AG04449 (cell line): ENCODE measurements at regions of chr6 and their contacts with region 1.

Region 1: GRCh38 chr6:85354761-85355618 is 94.9 kb upstream of the NT5E start:
- DNase-seq: peak; percentile 12
- H3K4me3 ChIP-seq: no peak overlapping the region
- CTCF ChIP-seq: peak; percentile 77

Region 2: DNA sequence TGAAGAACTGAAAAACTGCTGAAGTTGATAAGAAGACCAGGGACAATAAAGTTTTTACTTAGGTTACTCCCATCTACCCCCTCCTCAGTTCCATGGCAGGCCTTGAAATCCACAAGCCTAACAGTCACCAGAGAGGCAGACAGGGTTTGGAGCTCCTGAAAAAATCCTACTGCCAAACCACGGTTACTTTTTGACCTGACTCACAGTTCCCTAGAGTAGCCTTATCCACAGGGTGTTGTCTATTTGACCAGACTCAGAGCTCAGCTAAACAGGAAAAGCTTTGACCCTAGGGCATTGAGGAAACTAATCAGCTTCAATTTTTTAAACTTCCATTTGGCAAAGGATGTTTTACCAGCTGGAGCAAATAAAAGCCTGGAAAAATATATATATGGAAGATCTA is 162.8 kb before region 1 on chr6:
- CTCF ChIA-PET with region 1: no interaction called
- POLR2A ChIA-PET with region 1: no interaction called
- DNase-seq: no peak
- H3K4me3 ChIP-seq: no peak overlapping the region
- CTCF ChIP-seq: no peak

Region 3: DNA sequence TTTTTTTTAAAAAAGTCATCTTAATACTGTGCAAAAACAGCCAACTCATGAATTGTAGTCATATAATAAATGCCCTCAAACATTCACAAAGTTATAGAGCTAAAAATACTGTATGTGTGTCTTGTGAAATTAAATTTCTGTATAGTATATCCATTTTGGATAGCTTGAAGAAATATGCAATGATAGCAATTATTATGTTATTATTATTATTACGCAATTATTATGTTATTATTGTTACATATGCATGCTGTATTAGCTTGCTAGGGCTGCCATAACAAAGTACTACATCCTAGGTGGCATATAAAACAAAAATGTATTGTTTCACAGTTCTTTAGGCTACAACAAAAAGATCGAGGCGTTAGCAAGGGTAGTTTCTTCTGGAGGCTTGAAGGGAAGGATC is 24.6 kb before region 1 on chr6:
- CTCF ChIA-PET with region 1: no interaction called
- POLR2A ChIA-PET with region 1: no interaction called
- DNase-seq: no peak
- H3K4me3 ChIP-seq: no peak overlapping the region
- CTCF ChIP-seq: no peak

Region 4: DNA sequence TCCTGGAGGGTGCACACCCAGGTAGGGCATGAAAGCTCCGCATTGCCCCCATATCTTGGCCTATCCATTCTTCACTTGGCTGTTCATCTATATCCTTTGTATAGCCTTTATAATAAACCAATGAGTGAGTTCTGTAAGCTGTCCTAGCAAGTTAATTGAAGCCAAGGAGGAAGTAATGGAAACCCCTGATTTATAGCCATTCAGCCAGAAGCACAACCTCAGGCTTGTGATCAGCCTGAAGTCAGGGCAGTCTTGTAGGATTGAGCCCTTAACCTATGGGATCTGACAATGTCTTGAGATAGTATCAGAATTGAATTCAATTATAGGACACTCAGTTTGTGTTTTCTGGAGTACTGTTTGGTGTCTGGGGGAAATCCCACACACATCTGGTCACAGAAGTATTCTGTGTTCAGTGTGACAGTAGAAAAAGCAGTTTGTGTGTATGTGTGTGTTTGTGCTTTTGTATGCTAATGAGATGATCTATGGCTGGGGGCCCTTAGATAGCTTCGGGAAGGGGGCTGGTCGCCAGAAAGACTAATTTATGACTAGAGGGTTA is 100.6 kb after region 1 on chr6:
- CTCF ChIA-PET with region 1: interaction called, 32 read pairs
- POLR2A ChIA-PET with region 1: interaction called, 7 read pairs
- DNase-seq: no peak
- H3K4me3 ChIP-seq: no peak overlapping the region
- CTCF ChIP-seq: no peak

Region 5: DNA sequence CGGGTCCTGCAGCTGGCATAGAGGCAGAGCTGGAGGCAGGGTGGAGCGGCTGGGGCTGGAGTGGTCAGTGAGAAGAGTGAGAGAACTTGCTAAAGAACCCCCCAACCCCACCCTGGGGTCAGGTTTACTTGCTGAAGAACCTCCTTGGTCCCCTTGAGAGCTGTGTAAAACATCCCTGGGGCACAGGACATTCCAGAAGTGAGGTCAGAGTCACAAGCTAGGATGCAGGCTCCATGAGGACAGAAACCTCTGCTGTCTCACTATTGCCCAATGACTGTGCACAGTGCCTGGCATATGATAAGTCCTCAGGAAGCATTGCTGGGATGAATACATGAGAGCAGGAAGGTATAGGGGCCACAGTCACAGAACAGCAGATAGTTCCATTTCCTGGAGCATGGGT is 113.3 kb after region 1 on chr6:
- CTCF ChIA-PET with region 1: interaction called, 21 read pairs
- POLR2A ChIA-PET with region 1: interaction called, 10 read pairs
- DNase-seq: no peak
- H3K4me3 ChIP-seq: no peak overlapping the region
- CTCF ChIP-seq: no peak

Region 6: DNA sequence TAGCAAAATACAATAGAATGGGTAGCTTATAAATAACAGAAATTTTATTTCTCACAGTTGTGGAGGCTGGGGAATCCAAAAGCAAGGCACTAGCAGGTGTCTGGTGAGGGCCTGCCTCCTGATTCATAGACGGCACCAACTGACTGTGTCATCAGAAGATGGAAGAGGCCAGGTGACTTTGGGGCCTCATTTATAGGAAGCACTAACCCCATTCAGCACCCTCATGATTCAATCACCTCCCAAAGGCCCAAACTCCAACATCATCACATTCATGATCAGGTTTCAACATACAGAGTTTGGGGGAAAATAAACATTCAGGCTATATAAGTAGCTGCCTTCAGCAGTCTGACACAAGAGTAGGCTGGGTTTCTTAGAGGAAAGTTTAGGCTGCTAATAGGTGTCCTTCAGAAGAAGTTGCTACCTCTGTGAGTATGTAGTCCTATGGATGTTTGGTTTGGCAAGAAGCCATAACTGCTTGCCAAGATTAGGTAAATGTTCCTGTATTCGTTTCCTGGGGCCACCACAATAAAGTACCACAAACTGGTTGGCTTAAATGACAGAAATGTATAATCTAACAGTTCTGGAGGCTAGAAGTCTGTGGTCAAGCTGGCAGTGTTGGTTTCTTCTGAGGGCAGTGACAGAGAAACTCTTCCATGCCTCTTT is 143.7 kb after region 1 on chr6:
- CTCF ChIA-PET with region 1: interaction called, 20 read pairs
- POLR2A ChIA-PET with region 1: no interaction called
- DNase-seq: no peak
- H3K4me3 ChIP-seq: no peak overlapping the region
- CTCF ChIP-seq: no peak